Naive thymus-derived CD4-positive, alpha-beta T cell (primary cell): ENCODE measurements at regions of chr12 and their contacts with region 1.

Region 1: GRCh38 chr12:6195665-6196535 is 4.3 kb upstream of the CD9 start:
- DNase-seq: peak; percentile 42 to 80 (median 64)
- ATAC-seq: peak; percentile 75
- H3K4me3 ChIP-seq: no peak overlapping the region
- H3K4me3 Mint-ChIP-seq: no peak overlapping the region
- H3K27ac ChIP-seq: no peak overlapping the region
- H3K27ac Mint-ChIP-seq: peak overlapping the region in 3 of 9 donors; percentile 16 to 50 (median 19)
- H3K4me1 ChIP-seq: no peaks in the 10 kb centered on the region
- H3K4me1 Mint-ChIP-seq: peaks cover 5 to 21% (median 9%) of the 10 kb centered on the region in 7 donors
- H3K27me3 ChIP-seq: peaks cover 0 to 3% of the 10 kb centered on the region in 2 donors
- H3K27me3 Mint-ChIP-seq: peaks cover 0 to 37% (median under 1%) of the 10 kb centered on the region in 5 donors

Region 2: DNA sequence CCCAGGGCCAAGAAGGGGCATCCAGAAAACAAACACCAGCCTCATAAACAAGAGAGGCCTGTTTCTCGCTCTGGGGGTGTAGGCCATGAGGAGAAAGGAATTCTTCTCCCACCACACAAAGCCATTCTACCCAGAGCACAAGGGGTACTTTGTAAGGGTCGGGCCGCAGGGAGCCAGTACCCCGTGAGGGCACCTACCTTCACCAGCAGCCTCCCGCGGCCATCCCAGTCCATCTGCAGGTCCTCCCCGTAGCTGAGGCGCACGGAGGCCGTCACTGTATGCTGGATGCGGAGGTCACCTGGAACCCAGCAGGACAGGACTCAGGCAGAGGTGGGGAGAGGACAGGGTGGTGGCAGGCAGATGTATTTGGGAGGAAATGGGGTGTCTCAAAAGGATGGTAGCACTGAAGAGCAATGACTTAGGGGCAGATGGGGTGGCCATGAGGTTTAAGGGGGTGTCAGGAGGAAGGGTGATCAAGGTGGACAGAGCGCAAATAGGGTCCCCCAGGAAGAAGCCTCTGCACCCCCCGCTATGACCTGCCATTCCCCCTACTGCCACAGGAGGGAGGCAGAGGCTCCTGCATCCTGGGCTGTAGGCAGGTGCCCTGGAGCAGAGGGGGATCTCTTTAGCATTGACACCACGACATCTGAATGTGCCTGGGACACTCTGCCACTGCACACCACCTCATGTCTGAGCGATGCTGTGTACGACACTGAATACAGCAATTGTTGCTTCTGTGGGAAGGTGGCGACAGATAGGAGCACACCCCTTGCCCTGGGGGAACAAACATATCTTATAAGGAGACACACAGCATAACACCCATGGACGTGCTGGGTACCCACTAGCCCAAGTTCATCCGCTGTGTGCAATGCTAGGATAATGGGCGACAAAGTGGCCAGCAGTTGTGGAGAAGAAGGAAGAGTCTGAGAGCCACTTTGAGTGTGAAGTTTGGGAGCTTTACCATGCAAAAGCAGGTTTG is 132.9 kb before region 1 on chr12:
- CTCF ChIA-PET with region 1: interaction called, 8 read pairs
- POLR2A ChIA-PET with region 1: no interaction called
- intact Hi-C with region 1: loop called (anchors 1 to 5 kb)
- DNase-seq: peak; percentile 47 to 80 (median 65)
- ATAC-seq: peak; percentile 89
- H3K4me3 ChIP-seq: no peak overlapping the region
- H3K4me3 Mint-ChIP-seq: peak overlapping the region in 1 of 10 donors; percentile 12
- H3K27ac ChIP-seq: no peak overlapping the region
- H3K27ac Mint-ChIP-seq: no peak overlapping the region
- H3K4me1 ChIP-seq: no peaks in the 10 kb centered on the region
- H3K4me1 Mint-ChIP-seq: peaks cover 0 to 3% (median 0%) of the 10 kb centered on the region in 7 donors
- H3K27me3 ChIP-seq: no peaks in the 10 kb centered on the region
- H3K27me3 Mint-ChIP-seq: peaks cover 0 to 7% (median 4%) of the 10 kb centered on the region in 5 donors

Region 3: DNA sequence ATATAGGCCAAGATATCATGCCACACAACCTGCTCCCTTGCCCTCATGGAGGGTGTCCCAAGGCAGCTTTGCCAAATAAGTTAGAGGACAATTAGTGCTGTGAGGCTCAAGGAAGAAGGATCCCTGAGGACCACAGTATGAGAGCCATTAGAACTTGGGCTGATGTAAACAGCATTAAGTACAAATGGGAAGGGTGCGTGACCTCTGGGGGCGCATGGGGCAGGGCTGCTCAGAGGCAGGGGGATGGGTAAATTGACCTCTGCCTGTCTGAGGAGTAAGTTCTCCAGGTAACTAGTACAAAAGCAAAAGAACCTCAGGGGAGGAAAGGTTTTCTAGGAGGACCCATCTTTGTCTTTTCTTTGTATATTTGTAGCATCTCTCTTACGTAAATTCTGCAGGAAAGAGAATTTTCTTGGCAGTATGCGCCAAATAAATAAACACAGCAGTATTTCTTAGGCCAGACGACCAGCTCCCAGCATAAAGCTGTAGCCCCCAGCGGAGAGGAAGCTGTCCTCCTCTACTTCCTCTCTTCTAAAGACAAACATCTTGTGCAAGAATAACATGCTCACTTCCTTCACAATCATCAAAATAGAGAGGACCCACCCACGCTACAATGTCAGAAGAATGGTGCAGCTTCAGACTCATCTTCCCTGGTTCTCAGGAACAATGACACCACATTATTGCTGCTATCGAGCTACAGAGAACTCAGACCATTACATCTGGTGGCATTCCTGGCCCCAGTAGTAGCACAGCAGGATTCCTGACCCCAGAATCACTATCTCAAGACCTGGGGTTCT is 55.1 kb before region 1 on chr12:
- CTCF ChIA-PET with region 1: interaction called, 8 read pairs
- POLR2A ChIA-PET with region 1: no interaction called
- intact Hi-C with region 1: loop called in 1 of 2 experiments (anchors 2 kb)
- DNase-seq: peak in 8 of 9 donors; percentile 28 to 72 (median 68)
- ATAC-seq: peak; percentile 78
- H3K4me3 ChIP-seq: peak overlapping the region; percentile 24
- H3K4me3 Mint-ChIP-seq: peak overlapping the region; percentile 61 to 88 (median 78)
- H3K27ac ChIP-seq: peak overlapping the region; percentile 62
- H3K27ac Mint-ChIP-seq: peak overlapping the region; percentile 91 to 99 (median 97)
- H3K4me1 ChIP-seq: peaks cover 3 to 51% of the 10 kb centered on the region in 2 donors
- H3K4me1 Mint-ChIP-seq: peaks cover 32 to 61% (median 56%) of the 10 kb centered on the region in 7 donors
- H3K27me3 ChIP-seq: no peaks in the 10 kb centered on the region
- H3K27me3 Mint-ChIP-seq: no peaks in the 10 kb centered on the region

Region 4: DNA sequence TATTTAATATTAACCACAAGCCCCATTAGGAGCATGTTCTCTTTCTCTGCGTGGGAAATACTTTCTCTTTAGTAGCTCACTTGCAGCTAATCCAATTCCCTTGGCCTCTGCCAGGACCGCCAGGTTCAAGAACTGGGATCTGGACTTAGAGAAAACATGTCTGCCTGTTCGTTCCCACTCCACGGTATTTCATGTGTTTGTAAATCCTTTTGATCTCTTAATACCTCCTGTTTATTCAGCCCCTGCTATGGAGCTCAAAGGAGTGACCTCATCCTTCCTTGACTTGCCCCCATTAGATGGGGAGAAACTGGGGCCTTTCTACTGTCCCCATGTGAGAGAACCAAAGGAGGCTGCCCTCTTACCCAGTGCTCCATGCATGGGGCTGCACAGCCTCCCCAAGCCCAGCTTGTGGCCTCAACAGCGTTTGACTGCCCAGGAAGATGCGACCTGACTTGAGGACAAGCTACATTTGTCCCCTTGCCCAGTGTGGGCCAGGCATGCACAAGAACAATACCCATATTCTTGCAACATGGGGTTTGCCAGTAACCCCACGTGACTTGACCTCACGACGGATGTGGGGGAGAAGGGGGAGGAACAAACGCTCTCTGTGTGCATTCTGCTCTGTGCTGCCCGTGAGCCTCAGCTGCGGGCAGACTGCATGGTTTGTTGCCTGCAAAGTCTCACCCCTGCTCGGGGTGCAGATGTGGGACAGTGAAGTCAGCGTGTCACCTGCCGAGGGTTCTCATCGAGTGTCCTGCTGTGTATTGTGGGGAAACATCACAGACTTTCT is 34.6 kb after region 1 on chr12:
- CTCF ChIA-PET with region 1: interaction called, 4 read pairs
- POLR2A ChIA-PET with region 1: no interaction called
- intact Hi-C with region 1: loop called in 1 of 2 experiments (anchors 5 kb)
- DNase-seq: peak; percentile 33 to 77 (median 70)
- ATAC-seq: peak; percentile 95
- H3K4me3 ChIP-seq: no peak overlapping the region
- H3K4me3 Mint-ChIP-seq: peak overlapping the region; percentile 53 to 82 (median 72)
- H3K27ac ChIP-seq: peak overlapping the region; percentile 53
- H3K27ac Mint-ChIP-seq: peak overlapping the region; percentile 70 to 98 (median 94)
- H3K4me1 ChIP-seq: peaks cover 21 to 27% of the 10 kb centered on the region in 2 donors
- H3K4me1 Mint-ChIP-seq: peaks cover 22 to 43% (median 33%) of the 10 kb centered on the region in 7 donors
- H3K27me3 ChIP-seq: no peaks in the 10 kb centered on the region
- H3K27me3 Mint-ChIP-seq: peaks cover 0 to 2% (median 0%) of the 10 kb centered on the region in 5 donors

Region 5: GRCh38 chr12:6285063-6285477 is 89.2 kb after region 1 on chr12:
- CTCF ChIA-PET with region 1: interaction called, 7 read pairs
- POLR2A ChIA-PET with region 1: no interaction called
- intact Hi-C with region 1: loop called (anchors 1 kb)
- DNase-seq: peak; percentile 33 to 70 (median 56)
- ATAC-seq: peak; percentile 90
- H3K4me3 ChIP-seq: no peak overlapping the region
- H3K4me3 Mint-ChIP-seq: no peak overlapping the region
- H3K27ac ChIP-seq: no peak overlapping the region
- H3K27ac Mint-ChIP-seq: peak overlapping the region in 1 of 9 donors; percentile 20
- H3K4me1 ChIP-seq: no peaks in the 10 kb centered on the region
- H3K4me1 Mint-ChIP-seq: peaks cover 0 to 6% (median 4%) of the 10 kb centered on the region in 7 donors
- H3K27me3 ChIP-seq: peaks cover 0 to 2% of the 10 kb centered on the region in 2 donors
- H3K27me3 Mint-ChIP-seq: peaks cover 0 to 19% (median 13%) of the 10 kb centered on the region in 5 donors